HepG2 (cell line): ENCODE measurements at regions of chr3 and their contacts with region 1.

Region 1: GRCh38 chr3:113626503-113627371 is 69.7 kb downstream of the USF3 start:
- DNase-seq: peak; percentile 61
- ATAC-seq: peak; percentile 85
- H3K4me3 ChIP-seq: 0 out of 6 replicates have a peak overlapping the region, but pooled peaks of 1 of the 3 experiments have one; percentile 9
- H3K27ac ChIP-seq: no peak overlapping the region
- H3K4me1 ChIP-seq: peaks cover 52% of the 10 kb centered on the region
- H3K27me3 ChIP-seq: 0 out of 5 replicates have a peak, but pooled peaks cover 0 to 9% of the 10 kb centered on the region in 2 experiments
- CTCF ChIP-seq: peak; percentile 86
- EP300 ChIP-seq: no peak
- POLR2A ChIP-seq: no peak
- RAD21 ChIP-seq: peak; percentile 82

Region 2: DNA sequence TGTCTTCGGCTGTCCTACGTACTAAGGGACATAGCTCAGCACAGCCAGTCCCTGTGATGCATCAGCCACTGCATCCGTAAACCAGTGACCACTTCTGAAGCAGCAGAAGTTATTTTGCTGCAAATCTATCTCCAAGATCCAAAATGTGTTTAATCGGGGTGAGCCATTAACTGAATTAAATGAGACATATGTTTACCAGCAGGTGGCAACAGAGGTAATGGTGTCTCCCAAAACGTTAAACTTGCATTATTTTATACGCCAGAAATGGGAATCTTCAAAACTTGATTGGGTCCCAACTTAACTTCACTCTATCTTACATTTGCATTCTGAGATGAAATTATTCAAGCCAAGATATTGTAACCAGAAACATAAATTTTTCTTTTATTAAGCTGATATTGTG is 490.7 kb before region 1 on chr3:
- CTCF ChIA-PET with region 1: no interaction called
- POLR2A ChIA-PET with region 1: no interaction called
- in situ Hi-C with region 1: no loop called
- intact Hi-C with region 1: loop called (anchors 10 kb)
- DNase-seq: no peak
- ATAC-seq: no peak
- H3K4me3 ChIP-seq: no peak overlapping the region
- H3K27ac ChIP-seq: no peak overlapping the region
- H3K4me1 ChIP-seq: no peaks in the 10 kb centered on the region
- H3K27me3 ChIP-seq: no peaks in the 10 kb centered on the region
- CTCF ChIP-seq: peak; percentile 42
- EP300 ChIP-seq: no peak
- POLR2A ChIP-seq: no peak
- RAD21 ChIP-seq: no peak

Region 3: GRCh38 chr3:113495035-113495434 is 131.7 kb before region 1 on chr3:
- CTCF ChIA-PET with region 1: interaction called, 29 read pairs
- POLR2A ChIA-PET with region 1: no interaction called
- in situ Hi-C with region 1: loop called (anchors 10 kb)
- intact Hi-C with region 1: loop called (anchors 1 kb)
- DNase-seq: peak; percentile 34
- ATAC-seq: peak; percentile 63
- H3K4me3 ChIP-seq: no peak overlapping the region
- H3K27ac ChIP-seq: no peak overlapping the region
- H3K4me1 ChIP-seq: no peaks in the 10 kb centered on the region
- H3K27me3 ChIP-seq: no peaks in the 10 kb centered on the region
- CTCF ChIP-seq: peak; percentile 54
- EP300 ChIP-seq: no peak
- POLR2A ChIP-seq: no peak
- RAD21 ChIP-seq: peak; percentile 53; the same call in 1 of the 2 replicates

Region 4: DNA sequence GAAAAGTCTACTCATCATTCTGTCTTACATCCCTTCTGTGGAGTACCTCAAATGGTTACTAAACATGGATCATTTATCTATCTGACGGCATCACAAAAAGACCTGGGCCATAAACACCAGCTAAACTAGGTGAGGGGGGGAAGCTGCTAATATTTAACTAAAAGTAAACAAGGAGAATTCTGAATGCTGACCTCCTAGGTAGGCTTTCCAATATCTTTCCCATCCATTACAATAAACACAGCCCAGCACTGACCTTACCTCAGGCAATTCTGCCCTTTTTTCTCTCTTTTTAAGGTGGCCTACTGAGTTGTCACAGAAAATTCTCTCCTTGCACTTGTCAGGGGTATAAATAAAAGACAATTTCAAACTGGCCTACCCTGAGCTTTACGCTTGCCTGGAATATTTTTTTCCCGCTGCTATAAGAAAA is 36.6 kb after region 1 on chr3:
- CTCF ChIA-PET with region 1: no interaction called
- POLR2A ChIA-PET with region 1: interaction called, 11 read pairs
- in situ Hi-C with region 1: no loop called
- intact Hi-C with region 1: loop called (anchors 2 kb)
- DNase-seq: peak; percentile 94
- ATAC-seq: peak; percentile 97
- H3K4me3 ChIP-seq: peak overlapping the region; percentile 11 to 33 (median 30); a peak in 4 of 6 replicates
- H3K27ac ChIP-seq: peak overlapping the region; percentile 88
- H3K4me1 ChIP-seq: peaks cover 42% of the 10 kb centered on the region
- H3K27me3 ChIP-seq: no peaks in the 10 kb centered on the region
- CTCF ChIP-seq: no peak
- EP300 ChIP-seq: peak in 1 of 2 experiments; percentile 82; a peak in 2 of 4 replicates
- POLR2A ChIP-seq: 0 out of 4 replicates have a peak, but pooled peaks of 1 of the 2 experiments have one; percentile 15
- RAD21 ChIP-seq: no peak

Region 5: DNA sequence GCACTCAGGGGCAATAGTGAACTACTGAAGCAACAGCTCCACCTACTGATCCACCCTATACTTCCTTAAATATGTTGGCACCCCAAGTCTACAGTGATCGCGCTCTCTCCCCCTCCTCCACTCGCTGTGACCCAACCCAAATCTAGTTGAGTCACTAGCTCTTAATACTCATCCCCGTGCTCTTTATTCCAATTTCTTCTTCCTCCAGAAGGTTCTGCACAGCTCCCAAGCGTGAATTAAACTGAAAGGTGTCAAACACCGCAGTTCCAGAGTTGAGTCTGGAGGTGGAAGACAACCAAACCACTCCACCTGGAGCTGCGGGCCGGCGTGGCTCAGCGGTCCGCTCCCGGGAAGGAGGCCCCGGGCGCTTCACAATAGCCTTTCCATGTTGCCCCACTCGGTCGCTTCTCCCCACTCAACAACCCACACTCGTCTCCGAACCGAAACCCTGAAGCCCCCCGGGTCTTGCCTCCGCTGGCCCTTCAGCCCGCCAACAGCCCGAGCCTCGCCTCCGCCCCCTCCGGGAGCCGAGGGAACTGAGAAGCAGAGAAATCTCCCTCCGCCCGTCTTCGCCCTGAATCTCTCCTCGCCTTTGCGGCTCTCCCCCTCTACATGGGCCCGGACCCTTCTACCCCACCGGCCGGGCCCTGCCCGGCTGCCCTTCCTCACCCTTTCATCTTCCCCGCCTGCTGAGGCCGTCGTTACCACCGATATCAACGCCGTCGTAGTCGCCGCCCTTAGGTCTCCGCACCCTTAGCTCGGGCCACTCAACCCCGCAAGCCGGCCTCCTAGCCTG is 118.7 kb after region 1 on chr3:
- CTCF ChIA-PET with region 1: no interaction called
- POLR2A ChIA-PET with region 1: no interaction called
- in situ Hi-C with region 1: no loop called
- intact Hi-C with region 1: loop called (anchors 2 kb)
- DNase-seq: peak; percentile 79
- ATAC-seq: peak; percentile 73
- H3K4me3 ChIP-seq: peak overlapping the region; percentile 92 to 100 (median 97)
- H3K27ac ChIP-seq: peak overlapping the region; percentile 100
- H3K4me1 ChIP-seq: peaks cover 60% of the 10 kb centered on the region
- H3K27me3 ChIP-seq: no peaks in the 10 kb centered on the region; a peak in 1 of 5 replicates
- CTCF ChIP-seq: peak; percentile 90
- EP300 ChIP-seq: 0 out of 4 replicates have a peak, but pooled peaks of 1 of the 2 experiments have one; percentile 5
- POLR2A ChIP-seq: 0 out of 4 replicates have a peak, but pooled peaks of 1 of the 2 experiments have one; percentile 10
- RAD21 ChIP-seq: 0 out of 2 replicates have a peak, but pooled peaks have one; percentile 21